Astrocyte of the cerebellum (primary cell): ENCODE measurements at regions of chr6 and their contacts with region 1.

Region 1: GRCh38 chr6:142200846-142201628 is 54.0 kb downstream of the VTA1 start:
- DNase-seq: no peak
- H3K4me3 ChIP-seq: no peak overlapping the region
- CTCF ChIP-seq: no peak

Region 2: GRCh38 chr6:141097471-141097870 is 1103.6 kb before region 1 on chr6:
- in situ Hi-C with region 1: no loop called
- DNase-seq: no peak
- H3K4me3 ChIP-seq: no peak overlapping the region
- CTCF ChIP-seq: no peak

Region 3: GRCh38 chr6:142155895-142156757 is 44.9 kb before region 1 on chr6:
- in situ Hi-C with region 1: loop called (anchors 5 kb)
- DNase-seq: no peak
- H3K4me3 ChIP-seq: no peak overlapping the region
- CTCF ChIP-seq: no peak